Heart right ventricle (tissue), 16 donors: ENCODE measurements at regions of chr17 and their contacts with region 1.

Region 1: GRCh38 chr17:2106308-2106955 is 51.5 kb downstream of the HIC1 start:
- DNase-seq: no peak
- ATAC-seq: peak; percentile 33 to 65 (median 48)
- H3K4me3 ChIP-seq: peak overlapping the region in 1 of 10 donors; percentile 10
- H3K27ac ChIP-seq: peak overlapping the region; percentile 26 to 83 (median 56)
- H3K4me1 ChIP-seq: peaks cover 16 to 51% (median 33%) of the 10 kb centered on the region in 9 donors
- H3K27me3 ChIP-seq: no peaks in the 10 kb centered on the region
- CTCF ChIP-seq: no peak

Region 2: GRCh38 chr17:2064980-2065785 is 41.2 kb before region 1 on chr17:
- intact Hi-C with region 1: loop called in 1 of 10 experiments (anchors 1 kb)
- DNase-seq: peak in 1 of 2 donors; percentile 71
- ATAC-seq: peak in 6 of 8 donors; percentile 6 to 14 (median 8)
- H3K4me3 ChIP-seq: no peak overlapping the region
- H3K27ac ChIP-seq: peak overlapping the region; percentile 54 to 97 (median 93)
- H3K4me1 ChIP-seq: peaks cover 35 to 98% (median 87%) of the 10 kb centered on the region in 9 donors
- H3K27me3 ChIP-seq: no peaks in the 10 kb centered on the region
- CTCF ChIP-seq: peak in 6 of 9 donors; percentile 33 to 59 (median 48)